ENCODE measurements at regions of chr6 and their contacts with region 1.

Region 1: GRCh38 chr6:163367497-163368183 is 46.9 kb upstream of the QKI start:
- DNase-seq: peak in 1 of 10 donors; percentile 12
- H3K4me3 ChIP-seq: no peak overlapping the region
- H3K27ac ChIP-seq: peak overlapping the region in 1 of 59 donors; percentile 70
- H3K27me3 ChIP-seq: no peaks in the 10 kb centered on the region
- CTCF ChIP-seq: no peak

Region 2: DNA sequence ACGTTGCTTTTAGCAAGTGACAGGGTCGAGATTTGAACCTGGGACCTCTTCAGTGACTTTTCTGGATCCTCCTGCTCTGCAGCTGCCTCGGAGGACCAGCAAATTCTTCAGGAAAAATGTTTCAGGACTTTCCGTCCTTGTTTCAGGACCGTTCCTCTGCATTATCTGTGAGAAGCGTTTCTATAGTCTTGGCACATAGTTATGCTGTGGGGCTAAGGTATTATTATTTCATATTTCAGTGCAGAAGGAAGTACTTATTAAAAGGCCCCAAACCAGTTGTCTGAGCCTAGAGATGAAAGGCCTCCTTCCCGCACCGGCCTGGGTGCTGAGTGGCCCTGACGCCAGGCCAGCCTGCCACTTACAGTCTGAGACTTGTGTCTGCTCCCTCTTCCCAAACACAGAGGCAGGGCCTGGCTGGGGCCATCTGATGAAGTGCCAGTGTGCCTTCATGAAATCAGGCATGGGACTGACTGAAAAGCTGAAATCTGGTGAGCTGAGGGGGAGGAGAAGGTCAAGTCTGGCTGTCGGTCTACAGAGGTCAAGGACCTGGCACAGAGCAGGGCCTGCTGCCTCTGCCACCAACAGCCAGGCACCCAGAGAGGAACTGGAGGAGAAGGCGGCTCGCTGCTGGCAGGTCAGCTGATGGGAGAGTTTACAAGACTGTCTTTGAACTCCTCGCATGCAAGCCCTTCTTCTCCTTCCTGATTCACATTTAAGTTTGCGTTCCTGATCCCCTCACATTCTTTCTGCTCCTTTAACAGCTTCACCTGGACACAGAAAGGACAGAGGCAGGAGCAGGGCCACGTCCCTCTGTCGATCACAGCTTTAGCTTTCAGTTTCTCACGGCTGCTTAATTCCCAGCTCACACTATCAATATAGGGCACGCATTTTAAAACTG is 38.0 kb after region 1 on chr6:
- intact Hi-C with region 1: loop called in 1 of 2 experiments (anchors 2 kb)
- DNase-seq: peak in 9 of 10 donors; percentile 53 to 78 (median 74)
- H3K4me3 ChIP-seq: peak overlapping the region; percentile 8 to 62 (median 44)
- H3K27ac ChIP-seq: peak overlapping the region; percentile 77 to 100 (median 96)
- H3K27me3 ChIP-seq: no peaks in the 10 kb centered on the region
- CTCF ChIP-seq: peak in 3 of 56 donors; percentile 6 to 13 (median 9)

Measured in dorsolateral prefrontal cortex (tissue), 120 donors.